ENCODE measurements at regions of chr6 and their contacts with region 1.

Region 1: DNA sequence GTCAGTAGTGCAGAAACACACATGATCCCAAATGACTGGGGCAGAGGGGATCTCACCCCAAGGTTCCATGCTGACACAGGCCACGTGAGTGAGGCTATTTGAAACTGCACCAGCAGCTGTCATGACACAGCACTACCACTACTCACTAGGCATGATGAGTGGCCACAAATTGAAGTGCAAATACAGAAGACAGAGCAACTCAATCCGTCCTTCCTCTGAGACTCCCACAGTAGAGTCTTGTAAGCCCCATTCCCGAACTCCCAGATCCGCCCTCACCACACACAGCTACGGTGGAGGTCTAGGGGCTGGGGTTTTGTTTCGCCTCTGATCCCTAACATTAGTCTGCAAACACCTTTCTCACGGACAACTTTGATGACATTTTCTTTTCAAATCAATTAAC is 113.3 kb upstream of the NUP153 start:
- DNase-seq: no peak
- ATAC-seq: no peak
- H3K4me3 Mint-ChIP-seq: no peak overlapping the region
- H3K27ac Mint-ChIP-seq: no peak overlapping the region
- H3K4me1 Mint-ChIP-seq: no peaks in the 10 kb centered on the region
- H3K27me3 Mint-ChIP-seq: peaks cover 13% of the 10 kb centered on the region
- CTCF ChIP-seq: no peak

Region 2: GRCh38 chr6:17156112-17156921 is 663.7 kb before region 1 on chr6:
- CTCF ChIA-PET with region 1: interaction called, 3 read pairs
- POLR2A ChIA-PET with region 1: no interaction called
- intact Hi-C with region 1: loop called (anchors 10 kb)
- DNase-seq: peak; percentile 78
- ATAC-seq: no peak
- H3K4me3 Mint-ChIP-seq: no peak overlapping the region
- H3K27ac Mint-ChIP-seq: no peak overlapping the region
- H3K4me1 Mint-ChIP-seq: no peaks in the 10 kb centered on the region
- H3K27me3 Mint-ChIP-seq: peaks cover 8% of the 10 kb centered on the region
- CTCF ChIP-seq: peak; percentile 86

Measured in activated CD8-positive, alpha-beta T cell treated with anti-CD3 and anti-CD28 coated beads for 36 hours (primary cell).